Esophagus muscularis mucosa (tissue), 4 donors: ENCODE measurements at regions of chr22 and their contacts with region 1.

Region 1: GRCh38 chr22:42662114-42663021 is 13.2 kb upstream of the CYB5R3 start:
- DNase-seq: no peak
- H3K4me3 ChIP-seq: peak overlapping the region; percentile 60 to 72 (median 64)
- H3K27ac ChIP-seq: peak overlapping the region; percentile 67 to 79 (median 74)
- H3K4me1 ChIP-seq: peaks cover 8 to 16% (median 15%) of the 10 kb centered on the region in 4 donors
- H3K27me3 ChIP-seq: no peaks in the 10 kb centered on the region
- CTCF ChIP-seq: peak; percentile 81 to 88 (median 82)
- EP300 ChIP-seq: no peak
- POLR2A ChIP-seq: no peak

Region 2: DNA sequence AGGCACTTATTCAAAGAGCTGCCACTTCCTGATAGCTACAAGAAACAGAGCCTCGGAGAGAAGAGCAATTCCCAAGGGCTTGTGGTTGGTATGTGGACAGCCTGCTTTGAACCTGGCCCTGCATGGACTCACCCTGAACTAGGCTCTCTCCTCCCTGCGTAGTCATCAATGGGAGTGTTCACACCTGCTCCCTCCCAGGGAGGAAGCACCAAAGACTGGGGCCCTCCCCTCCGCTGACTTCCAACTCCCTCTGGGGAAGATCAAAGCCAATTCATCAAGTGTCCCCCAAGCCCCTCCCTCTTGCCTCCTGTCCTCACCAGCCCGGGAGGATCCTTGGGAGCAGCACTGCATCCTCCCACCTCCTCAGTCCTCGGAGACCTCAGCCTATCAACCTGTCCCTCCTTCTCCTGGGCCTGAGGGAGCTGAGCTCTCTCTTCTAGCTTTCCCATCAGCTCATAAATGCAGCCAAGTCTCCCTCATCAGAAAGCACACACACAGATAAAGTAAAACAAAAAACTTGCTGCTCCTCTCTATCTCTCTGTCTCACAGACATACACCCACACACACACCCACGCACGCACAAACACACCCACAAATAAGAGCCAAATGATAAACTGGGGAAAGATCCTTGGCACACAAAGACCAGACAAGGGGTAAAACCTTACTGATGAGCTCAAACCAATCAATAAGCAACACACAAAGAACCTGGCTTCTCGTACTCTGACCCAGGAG is 55.0 kb after region 1 on chr22:
- intact Hi-C with region 1: loop called (anchors 5 kb)
- DNase-seq: no peak
- H3K4me3 ChIP-seq: peak overlapping the region in 3 of 4 donors; percentile 9 to 35 (median 12)
- H3K27ac ChIP-seq: peak overlapping the region; percentile 94 to 99 (median 97)
- H3K4me1 ChIP-seq: peaks cover 65 to 87% (median 76%) of the 10 kb centered on the region in 4 donors
- H3K27me3 ChIP-seq: peaks cover 0 to 7% (median 0%) of the 10 kb centered on the region in 4 donors
- CTCF ChIP-seq: no peak
- EP300 ChIP-seq: no peak
- POLR2A ChIP-seq: no peak

Region 3: GRCh38 chr22:42780070-42780540 is 117.7 kb after region 1 on chr22:
- intact Hi-C with region 1: loop called (anchors 5 kb)
- DNase-seq: no peak
- H3K4me3 ChIP-seq: no peak overlapping the region
- H3K27ac ChIP-seq: no peak overlapping the region
- H3K4me1 ChIP-seq: peaks cover 0 to 6% (median 3%) of the 10 kb centered on the region in 4 donors
- H3K27me3 ChIP-seq: no peaks in the 10 kb centered on the region
- CTCF ChIP-seq: peak; percentile 86 to 88 (median 86)
- EP300 ChIP-seq: no peak
- POLR2A ChIP-seq: no peak

Region 4: GRCh38 chr22:42856865-42857704 is 194.7 kb after region 1 on chr22 and contains the start of gene ARFGAP3:
- intact Hi-C with region 1: loop called (anchors 10 kb)
- DNase-seq: peak; percentile 97
- H3K4me3 ChIP-seq: peak within 1 kb of the TSS; percentile 87 to 94 (median 90)
- H3K27ac ChIP-seq: peak within 1 kb of the TSS; percentile 95 to 98 (median 96)
- H3K4me1 ChIP-seq: peaks cover 14 to 42% (median 28%) of the 10 kb centered on the region in 4 donors
- H3K27me3 ChIP-seq: no peaks in the 10 kb centered on the region
- CTCF ChIP-seq: peak in 1 of 3 experiments; percentile 28
- EP300 ChIP-seq: no peak
- POLR2A ChIP-seq: peak; percentile 54
- total RNA-seq, gene ARFGAP3: 38.8 to 63.5 (median 41.4) TPM